Naive thymus-derived CD4-positive, alpha-beta T cell (primary cell): ENCODE measurements at regions of chr15 and their contacts with region 1.

Region 1: GRCh38 chr15:90400406-90401314 is 12.6 kb downstream of the IQGAP1 start:
- DNase-seq: peak in 8 of 9 donors; percentile 49 to 89 (median 82)
- ATAC-seq: peak; percentile 98
- H3K4me3 ChIP-seq: peak overlapping the region; percentile 37
- H3K4me3 Mint-ChIP-seq: peak overlapping the region; percentile 61 to 86 (median 80)
- H3K27ac ChIP-seq: peak overlapping the region; percentile 83
- H3K27ac Mint-ChIP-seq: peak overlapping the region; percentile 94 to 99 (median 99)
- H3K4me1 ChIP-seq: peaks cover 30 to 36% of the 10 kb centered on the region in 2 donors
- H3K4me1 Mint-ChIP-seq: peaks cover 38 to 71% (median 64%) of the 10 kb centered on the region in 7 donors
- H3K27me3 ChIP-seq: no peaks in the 10 kb centered on the region
- H3K27me3 Mint-ChIP-seq: no peaks in the 10 kb centered on the region

Region 2: GRCh38 chr15:90059208-90059985 is 341.3 kb before region 1 on chr15:
- CTCF ChIA-PET with region 1: no interaction called
- POLR2A ChIA-PET with region 1: no interaction called
- intact Hi-C with region 1: no loop called
- DNase-seq: peak; percentile 58 to 80 (median 64)
- ATAC-seq: peak; percentile 90
- H3K4me3 ChIP-seq: no peak overlapping the region
- H3K4me3 Mint-ChIP-seq: peak overlapping the region; percentile 29 to 69 (median 52)
- H3K27ac ChIP-seq: peak overlapping the region; percentile 68
- H3K27ac Mint-ChIP-seq: peak overlapping the region; percentile 84 to 94 (median 90)
- H3K4me1 ChIP-seq: peaks cover 15 to 33% of the 10 kb centered on the region in 2 donors
- H3K4me1 Mint-ChIP-seq: peaks cover 38 to 67% (median 55%) of the 10 kb centered on the region in 7 donors
- H3K27me3 ChIP-seq: no peaks in the 10 kb centered on the region
- H3K27me3 Mint-ChIP-seq: no peaks in the 10 kb centered on the region

Region 3: DNA sequence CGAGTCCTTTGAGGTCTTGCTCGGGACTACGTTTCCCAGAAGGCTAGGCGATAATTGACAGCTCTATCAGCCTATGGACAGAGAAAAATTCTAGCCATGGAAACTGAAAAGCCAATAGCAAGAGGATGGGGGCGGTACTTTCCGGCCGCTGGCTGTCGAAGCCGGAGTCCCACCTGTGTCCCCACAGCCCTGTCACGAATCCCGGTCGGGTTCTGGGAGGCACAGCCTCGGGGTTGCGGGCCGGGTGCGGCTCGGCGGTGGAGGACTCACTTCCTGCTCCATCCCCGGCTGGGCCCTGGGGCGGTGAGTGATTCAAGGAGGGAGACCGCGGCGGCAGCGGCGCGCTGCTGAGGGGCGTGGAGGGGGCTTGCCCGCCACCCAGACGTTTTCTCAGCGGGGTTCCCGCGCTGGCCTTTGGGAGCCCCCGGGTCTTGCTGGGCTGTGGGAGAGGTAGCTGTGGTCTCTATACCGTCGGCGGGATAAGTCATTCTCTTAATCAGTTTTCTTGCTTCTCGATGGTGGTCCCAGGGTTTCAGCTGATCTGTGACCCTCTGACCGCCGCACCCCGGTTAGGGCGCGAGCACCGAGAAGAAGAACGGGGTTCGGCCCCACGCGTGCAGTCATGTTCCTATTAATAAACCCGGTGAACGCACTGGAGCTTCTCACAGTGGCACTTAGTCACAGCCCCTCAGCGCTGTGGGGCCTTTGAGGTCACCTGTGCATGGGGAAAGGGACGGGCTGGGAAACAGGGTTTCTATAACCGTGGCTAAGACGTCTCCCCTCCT is 48.4 kb before region 1 on chr15 and contains the start of gene ZNF774:
- CTCF ChIA-PET with region 1: no interaction called
- POLR2A ChIA-PET with region 1: no interaction called
- intact Hi-C with region 1: loop called in 1 of 2 experiments (anchors 1 kb)
- DNase-seq: peak; percentile 74 to 95 (median 93)
- ATAC-seq: peak; percentile 99
- H3K4me3 ChIP-seq: peak within 1 kb of the TSS; percentile 91
- H3K4me3 Mint-ChIP-seq: peak within 1 kb of the TSS; percentile 86 to 92 (median 89)
- H3K27ac ChIP-seq: peak within 1 kb of the TSS; percentile 73
- H3K27ac Mint-ChIP-seq: peak within 1 kb of the TSS in 8 of 9 donors; percentile 8 to 86 (median 66)
- H3K4me1 ChIP-seq: peaks cover 5 to 11% of the 10 kb centered on the region in 2 donors
- H3K4me1 Mint-ChIP-seq: peaks cover 7 to 29% (median 9%) of the 10 kb centered on the region in 7 donors
- H3K27me3 ChIP-seq: no peaks in the 10 kb centered on the region
- H3K27me3 Mint-ChIP-seq: peaks cover 0 to 17% (median 0%) of the 10 kb centered on the region in 5 donors
- total RNA-seq, gene ZNF774: 0.22 to 2.0 (median 1.5) TPM

Region 4: GRCh38 chr15:90376789-90377188 is 23.9 kb before region 1 on chr15:
- CTCF ChIA-PET with region 1: interaction called, 3 read pairs
- POLR2A ChIA-PET with region 1: interaction called, 5 read pairs
- intact Hi-C with region 1: loop called in 1 of 2 experiments (anchors 1 kb)
- DNase-seq: peak in 8 of 9 donors; percentile 58 to 81 (median 74)
- ATAC-seq: peak; percentile 98
- H3K4me3 ChIP-seq: peak overlapping the region; percentile 11
- H3K4me3 Mint-ChIP-seq: peak overlapping the region; percentile 66 to 87 (median 72)
- H3K27ac ChIP-seq: no peak overlapping the region
- H3K27ac Mint-ChIP-seq: peak overlapping the region; percentile 7 to 92 (median 56)
- H3K4me1 ChIP-seq: peaks cover 32 to 35% of the 10 kb centered on the region in 2 donors
- H3K4me1 Mint-ChIP-seq: peaks cover 24 to 59% (median 48%) of the 10 kb centered on the region in 7 donors
- H3K27me3 ChIP-seq: no peaks in the 10 kb centered on the region
- H3K27me3 Mint-ChIP-seq: no peaks in the 10 kb centered on the region

Region 5: DNA sequence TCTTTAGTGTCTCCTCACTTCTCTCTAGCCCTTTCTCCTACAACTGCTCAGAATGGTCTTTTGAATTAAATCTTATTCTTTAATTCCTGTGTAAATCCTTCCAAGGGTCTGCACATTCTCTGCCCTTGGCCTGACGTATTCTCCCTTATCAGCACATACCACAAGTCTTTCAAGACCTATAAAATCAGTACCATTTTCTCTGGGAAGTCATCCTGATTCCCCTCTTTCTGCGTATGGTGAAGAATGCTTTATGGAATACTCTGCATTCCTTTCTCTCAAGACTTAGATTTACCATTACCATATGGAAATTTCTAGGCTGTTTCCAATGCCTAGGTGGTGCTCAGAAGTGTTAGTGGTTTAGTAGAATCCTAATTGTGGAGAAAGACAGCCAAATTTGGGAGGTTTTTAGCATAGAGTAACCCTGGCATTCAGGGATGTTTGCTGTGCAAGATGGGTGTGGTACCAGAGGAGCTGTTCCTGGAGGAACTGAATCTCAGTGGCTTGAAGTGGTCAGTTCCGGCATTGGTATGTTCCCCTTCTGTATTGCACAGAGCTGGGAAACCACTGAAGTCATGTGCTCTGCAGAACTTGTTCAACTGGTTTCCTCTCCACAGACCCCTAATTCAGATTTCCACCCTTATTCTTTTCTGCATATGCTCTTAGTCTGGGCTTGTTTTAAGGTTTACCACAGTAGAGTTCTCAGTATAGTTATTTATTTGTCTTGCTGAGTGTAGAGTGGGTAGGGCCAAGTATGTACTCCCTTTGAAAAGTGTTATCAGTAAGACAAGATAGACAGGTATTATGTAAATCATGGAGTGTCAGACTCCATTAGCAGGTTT is 11.9 kb after region 1 on chr15:
- CTCF ChIA-PET with region 1: no interaction called
- POLR2A ChIA-PET with region 1: interaction called, 4 read pairs
- intact Hi-C with region 1: loop called (anchors 1 kb)
- DNase-seq: no peak
- ATAC-seq: peak; percentile 78
- H3K4me3 ChIP-seq: no peak overlapping the region
- H3K4me3 Mint-ChIP-seq: peak overlapping the region; percentile 2 to 69 (median 57)
- H3K27ac ChIP-seq: no peak overlapping the region
- H3K27ac Mint-ChIP-seq: peak overlapping the region; percentile 1 to 79 (median 39)
- H3K4me1 ChIP-seq: peaks cover 30 to 31% of the 10 kb centered on the region in 2 donors
- H3K4me1 Mint-ChIP-seq: peaks cover 64 to 87% (median 80%) of the 10 kb centered on the region in 7 donors
- H3K27me3 ChIP-seq: no peaks in the 10 kb centered on the region
- H3K27me3 Mint-ChIP-seq: no peaks in the 10 kb centered on the region

Region 6: GRCh38 chr15:90436952-90437351 is 36.3 kb after region 1 on chr15:
- CTCF ChIA-PET with region 1: interaction called, 3 read pairs
- POLR2A ChIA-PET with region 1: no interaction called
- intact Hi-C with region 1: loop called in 1 of 2 experiments (anchors 5 kb)
- DNase-seq: no peak
- ATAC-seq: no peak
- H3K4me3 ChIP-seq: no peak overlapping the region
- H3K4me3 Mint-ChIP-seq: no peak overlapping the region
- H3K27ac ChIP-seq: no peak overlapping the region
- H3K27ac Mint-ChIP-seq: peak overlapping the region in 3 of 9 donors; percentile 4 to 45 (median 25)
- H3K4me1 ChIP-seq: peaks cover 0 to 6% of the 10 kb centered on the region in 2 donors
- H3K4me1 Mint-ChIP-seq: peaks cover 10 to 42% (median 28%) of the 10 kb centered on the region in 7 donors
- H3K27me3 ChIP-seq: no peaks in the 10 kb centered on the region
- H3K27me3 Mint-ChIP-seq: no peaks in the 10 kb centered on the region